ENCODE measurements at regions of chr7 and their contacts with region 1.

Region 1: GRCh38 chr7:101688183-101688831 is 59.2 kb upstream of the MYL10 start:
- DNase-seq: peak; percentile 72 to 91 (median 86)
- H3K4me3 ChIP-seq: peak overlapping the region; percentile 24
- H3K27ac ChIP-seq: no peak overlapping the region
- H3K4me1 ChIP-seq: peaks cover 6% of the 10 kb centered on the region
- H3K27me3 ChIP-seq: no peaks in the 10 kb centered on the region
- CTCF ChIP-seq: peak; percentile 94 to 96 (median 95)
- EP300 ChIP-seq: no peak
- POLR2A ChIP-seq: no peak

Region 2: DNA sequence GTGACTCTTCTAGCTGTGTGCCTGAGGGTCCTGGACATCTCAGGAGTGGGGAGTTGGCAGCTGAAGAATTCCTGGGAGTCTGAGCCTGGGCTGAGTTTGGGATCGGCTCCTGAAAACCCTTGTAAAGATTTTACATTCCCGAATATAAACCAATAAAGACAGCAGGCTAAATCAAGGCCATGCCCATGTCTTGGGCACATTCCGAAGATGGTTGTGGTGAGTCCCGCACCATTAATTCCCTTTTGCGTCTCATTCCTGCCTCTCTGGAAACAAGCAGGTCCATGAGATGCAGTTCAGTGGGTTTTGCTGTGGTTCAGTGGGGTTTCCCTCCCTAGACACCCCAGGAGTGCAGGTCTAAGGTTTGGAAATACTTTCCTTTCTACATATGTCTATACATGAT is 234.7 kb before region 1 on chr7:
- intact Hi-C with region 1: no loop called
- DNase-seq: no peak
- H3K4me3 ChIP-seq: no peak overlapping the region
- H3K27ac ChIP-seq: no peak overlapping the region
- H3K4me1 ChIP-seq: no peaks in the 10 kb centered on the region
- H3K27me3 ChIP-seq: no peaks in the 10 kb centered on the region
- CTCF ChIP-seq: no peak
- EP300 ChIP-seq: no peak
- POLR2A ChIP-seq: no peak

Region 3: DNA sequence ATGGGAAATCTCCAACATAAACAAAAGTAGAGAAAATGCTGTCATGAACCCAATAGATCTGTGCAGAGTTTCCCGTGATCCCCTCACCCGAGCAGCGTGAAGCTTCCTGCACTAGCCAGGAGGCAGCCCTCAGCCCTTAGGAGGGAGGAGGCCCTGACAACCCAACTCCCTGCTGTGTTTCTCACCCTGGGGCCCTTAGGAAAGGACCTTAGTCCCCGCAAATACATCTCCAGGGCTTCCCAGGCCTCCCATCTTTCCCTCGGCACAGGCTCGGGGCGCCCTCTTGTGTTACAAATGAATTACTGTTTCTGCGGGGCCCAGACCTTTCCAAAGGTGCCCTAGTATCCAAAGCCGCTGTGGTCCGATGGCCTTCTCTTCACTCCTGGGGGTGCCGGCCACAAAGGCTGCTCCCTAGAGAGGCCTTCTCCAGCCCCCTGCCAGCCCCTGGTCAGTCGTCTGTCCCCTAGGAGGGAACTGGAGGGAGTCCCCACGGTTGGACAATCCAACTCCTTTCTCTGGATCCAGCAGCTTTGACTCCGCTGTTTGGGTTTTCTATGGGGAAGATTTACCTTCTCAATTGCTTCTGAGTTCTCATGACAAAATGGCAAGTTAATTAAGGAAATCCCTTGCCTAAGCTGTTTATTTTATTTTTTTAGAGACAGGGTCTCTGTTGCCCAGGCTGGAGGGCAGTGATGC is 548.4 kb after region 1 on chr7:
- intact Hi-C with region 1: loop called (anchors 2 to 5 kb)
- DNase-seq: peak; percentile 58 to 78 (median 73)
- H3K4me3 ChIP-seq: no peak overlapping the region
- H3K27ac ChIP-seq: peak overlapping the region in 1 of 2 donors; percentile 25
- H3K4me1 ChIP-seq: no peaks in the 10 kb centered on the region
- H3K27me3 ChIP-seq: no peaks in the 10 kb centered on the region
- CTCF ChIP-seq: peak; percentile 76 to 81 (median 77)
- EP300 ChIP-seq: no peak
- POLR2A ChIP-seq: no peak